AG04450 (cell line): ENCODE measurements at regions of chr15 and their contacts with region 1.

Region 1: GRCh38 chr15:99928429-99928981 is 195.3 kb upstream of the LYSMD4 start:
- DNase-seq: peak; percentile 18
- H3K4me3 ChIP-seq: peak overlapping the region; percentile 58
- H3K27ac ChIP-seq: no peak overlapping the region
- H3K27me3 ChIP-seq: peaks cover 3% of the 10 kb centered on the region
- CTCF ChIP-seq: peak; percentile 53

Region 2: GRCh38 chr15:99421172-99421656 is 507.3 kb before region 1 on chr15:
- CTCF ChIA-PET with region 1: no interaction called
- POLR2A ChIA-PET with region 1: no interaction called
- DNase-seq: no peak
- H3K4me3 ChIP-seq: no peak overlapping the region
- H3K27ac ChIP-seq: peak overlapping the region; percentile 43
- H3K27me3 ChIP-seq: no peaks in the 10 kb centered on the region
- CTCF ChIP-seq: no peak

Region 3: GRCh38 chr15:100500226-100500990 is 571.9 kb after region 1 on chr15:
- CTCF ChIA-PET with region 1: interaction called, 11 read pairs
- POLR2A ChIA-PET with region 1: no interaction called
- DNase-seq: no peak
- H3K4me3 ChIP-seq: no peak overlapping the region
- H3K27ac ChIP-seq: no peak overlapping the region
- H3K27me3 ChIP-seq: no peaks in the 10 kb centered on the region
- CTCF ChIP-seq: no peak